ENCODE measurements at regions of chr12 and their contacts with region 1.

Region 1: DNA sequence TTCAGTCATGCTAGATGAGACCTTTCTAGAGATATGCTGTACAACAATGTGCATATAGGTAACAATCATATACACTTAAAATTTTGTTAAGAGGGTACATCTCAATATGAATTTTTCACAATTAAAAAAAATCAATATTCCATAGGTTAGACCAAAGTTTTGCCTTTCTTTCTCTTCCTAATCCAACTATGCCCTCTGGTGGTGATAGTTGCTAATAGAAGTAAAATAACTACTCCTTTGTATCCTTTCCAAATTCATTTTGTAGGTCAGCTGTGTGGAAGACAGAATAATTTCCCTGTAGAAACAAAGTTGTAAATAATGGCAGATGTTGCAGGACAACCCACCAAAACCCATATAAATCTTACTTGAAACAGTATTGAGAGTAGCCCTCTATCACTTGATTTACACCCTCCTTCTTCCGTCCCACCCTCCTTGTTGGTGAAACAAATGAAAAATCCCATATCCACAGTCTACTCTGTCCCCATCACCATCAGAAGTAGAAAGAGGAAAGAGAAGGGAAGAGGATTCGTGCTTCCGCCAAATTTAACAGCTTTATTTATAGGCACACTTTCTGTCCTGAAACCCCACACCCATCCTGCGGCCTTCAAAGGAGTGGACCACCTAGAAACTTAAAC is 34.2 kb upstream of the KICS2 start:
- DNase-seq: peak in 2 of 5 donors; percentile 74 to 87
- H3K4me3 ChIP-seq: no peak overlapping the region
- H3K27ac ChIP-seq: no peak overlapping the region
- H3K4me1 ChIP-seq: no peaks in the 10 kb centered on the region
- H3K27me3 ChIP-seq: no peaks in the 10 kb centered on the region
- CTCF ChIP-seq: peak; percentile 65

Region 2: DNA sequence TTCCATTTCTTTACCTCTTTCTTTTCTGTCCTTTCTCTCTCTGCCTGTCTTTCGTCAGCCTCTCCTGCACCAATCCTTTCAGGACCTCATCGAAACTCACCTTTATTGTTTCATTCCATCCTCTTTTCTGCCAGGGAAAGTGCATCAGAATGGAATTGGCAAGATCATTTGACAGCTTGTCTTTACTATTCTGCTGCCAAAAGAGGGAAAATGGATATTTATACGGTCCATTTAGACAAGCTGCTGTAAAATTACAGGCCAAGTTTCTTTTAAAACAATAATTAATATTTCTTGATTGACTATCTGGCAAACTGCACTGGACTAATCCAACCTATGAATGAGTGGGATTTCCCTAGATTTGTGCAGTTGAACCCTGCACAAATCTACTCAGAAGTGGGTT is 419.3 kb before region 1 on chr12:
- intact Hi-C with region 1: loop called (anchors 5 kb)
- DNase-seq: no peak
- H3K4me3 ChIP-seq: no peak overlapping the region
- H3K27ac ChIP-seq: no peak overlapping the region
- H3K4me1 ChIP-seq: no peaks in the 10 kb centered on the region
- H3K27me3 ChIP-seq: no peaks in the 10 kb centered on the region
- CTCF ChIP-seq: no peak

Measured in kidney (tissue), 22 donors.